ENCODE measurements at regions of chr11 and their contacts with region 1.

Region 1: DNA sequence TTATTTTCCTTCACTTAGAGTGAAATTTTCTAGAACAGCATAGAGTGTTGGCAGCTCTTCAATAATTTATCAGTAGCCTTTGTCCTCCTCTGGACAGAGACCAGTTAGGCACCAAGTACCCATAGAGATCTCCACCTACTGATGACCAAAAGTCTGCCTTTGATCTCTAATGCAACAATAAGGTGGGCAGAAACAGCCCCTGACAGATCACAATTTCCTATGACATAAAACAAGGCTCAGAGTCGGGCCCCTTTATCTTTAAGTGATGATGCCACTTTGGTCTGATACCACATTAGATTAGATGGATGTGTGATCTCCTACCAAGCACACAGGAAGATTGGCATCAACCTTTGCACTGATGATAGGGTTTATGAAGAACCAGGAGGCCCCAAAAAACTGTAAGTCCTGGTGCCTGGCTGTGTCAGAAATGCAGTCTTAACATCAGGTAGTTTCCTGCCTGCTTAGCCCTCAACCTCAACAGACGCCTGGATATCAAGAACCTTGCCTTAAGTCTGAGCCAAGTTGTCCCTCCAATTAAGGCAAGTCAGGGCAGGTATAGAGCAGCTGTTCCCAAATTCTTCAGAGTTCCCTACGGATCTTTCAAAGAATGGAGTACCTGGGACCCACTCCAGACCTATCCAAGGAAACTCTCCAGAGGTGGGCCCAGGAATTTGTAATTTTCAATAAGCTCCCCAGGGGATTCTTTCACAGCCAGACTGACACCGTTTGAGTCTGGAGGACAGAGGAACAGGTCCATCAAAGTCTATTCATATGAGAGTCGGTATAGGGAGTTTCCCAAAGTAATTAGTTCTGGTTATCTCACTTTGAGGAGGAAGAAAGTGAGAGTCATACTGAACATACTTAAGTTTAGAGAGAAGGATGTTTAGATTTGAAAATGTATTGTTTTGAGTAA is 30.6 kb upstream of the TMPRSS4 start:
- DNase-seq: peak; percentile 44
- ATAC-seq: peak; percentile 88
- H3K4me3 ChIP-seq: no peak overlapping the region
- H3K27ac ChIP-seq: no peak overlapping the region
- H3K4me1 ChIP-seq: peaks cover 20% of the 10 kb centered on the region
- H3K27me3 ChIP-seq: no peaks in the 10 kb centered on the region
- CTCF ChIP-seq: no peak
- EP300 ChIP-seq: no peak
- POLR2A ChIP-seq: no peak
- RAD21 ChIP-seq: no peak

Region 2: GRCh38 chr11:118002541-118003423 is 43.5 kb before region 1 on chr11:
- CTCF ChIA-PET with region 1: interaction called, 4 read pairs
- POLR2A ChIA-PET with region 1: interaction called, 8 read pairs
- RAD21 ChIA-PET with region 1: interaction called, 4 read pairs
- SMC1A ChIA-PET with region 1: interaction called, 27 read pairs
- in situ Hi-C with region 1: no loop called
- intact Hi-C with region 1: no loop called
- DNase-seq: no peak
- ATAC-seq: peak; percentile 6; the same call in 2 of the 3 replicates
- H3K4me3 ChIP-seq: no peak overlapping the region
- H3K27ac ChIP-seq: peak overlapping the region; percentile 38
- H3K4me1 ChIP-seq: peaks cover 70% of the 10 kb centered on the region
- H3K27me3 ChIP-seq: no peaks in the 10 kb centered on the region
- CTCF ChIP-seq: no peak
- EP300 ChIP-seq: no peak
- POLR2A ChIP-seq: no peak
- RAD21 ChIP-seq: no peak

Region 3: GRCh38 chr11:118033443-118033842 is 12.9 kb before region 1 on chr11:
- CTCF ChIA-PET with region 1: interaction called, 7 read pairs
- POLR2A ChIA-PET with region 1: interaction called, 6 read pairs
- RAD21 ChIA-PET with region 1: interaction called, 5 read pairs
- SMC1A ChIA-PET with region 1: interaction called, 10 read pairs
- in situ Hi-C with region 1: no loop called
- intact Hi-C with region 1: no loop called
- DNase-seq: no peak
- ATAC-seq: peak; percentile 97
- H3K4me3 ChIP-seq: no peak overlapping the region
- H3K27ac ChIP-seq: no peak overlapping the region
- H3K4me1 ChIP-seq: peaks cover 12% of the 10 kb centered on the region
- H3K27me3 ChIP-seq: no peaks in the 10 kb centered on the region
- CTCF ChIP-seq: no peak
- EP300 ChIP-seq: peak in 1 of 2 experiments; percentile 50; a peak in 1 of 4 replicates
- POLR2A ChIP-seq: no peak
- RAD21 ChIP-seq: no peak

Region 4: GRCh38 chr11:118180300-118180703 is 134.0 kb after region 1 on chr11:
- CTCF ChIA-PET with region 1: no interaction called
- POLR2A ChIA-PET with region 1: no interaction called
- RAD21 ChIA-PET with region 1: no interaction called
- SMC1A ChIA-PET with region 1: no interaction called
- in situ Hi-C with region 1: no loop called
- intact Hi-C with region 1: no loop called
- DNase-seq: no peak
- ATAC-seq: peak; percentile 88
- H3K4me3 ChIP-seq: no peak overlapping the region
- H3K27ac ChIP-seq: no peak overlapping the region
- H3K4me1 ChIP-seq: no peaks in the 10 kb centered on the region
- H3K27me3 ChIP-seq: peaks cover 0 to 7% of the 10 kb centered on the region in 2 experiments; a peak in 1 of 4 replicates
- CTCF ChIP-seq: 0 out of 6 replicates have a peak, but pooled peaks of 1 of the 3 experiments have one; percentile 2
- EP300 ChIP-seq: no peak
- POLR2A ChIP-seq: no peak
- RAD21 ChIP-seq: no peak

Region 5: DNA sequence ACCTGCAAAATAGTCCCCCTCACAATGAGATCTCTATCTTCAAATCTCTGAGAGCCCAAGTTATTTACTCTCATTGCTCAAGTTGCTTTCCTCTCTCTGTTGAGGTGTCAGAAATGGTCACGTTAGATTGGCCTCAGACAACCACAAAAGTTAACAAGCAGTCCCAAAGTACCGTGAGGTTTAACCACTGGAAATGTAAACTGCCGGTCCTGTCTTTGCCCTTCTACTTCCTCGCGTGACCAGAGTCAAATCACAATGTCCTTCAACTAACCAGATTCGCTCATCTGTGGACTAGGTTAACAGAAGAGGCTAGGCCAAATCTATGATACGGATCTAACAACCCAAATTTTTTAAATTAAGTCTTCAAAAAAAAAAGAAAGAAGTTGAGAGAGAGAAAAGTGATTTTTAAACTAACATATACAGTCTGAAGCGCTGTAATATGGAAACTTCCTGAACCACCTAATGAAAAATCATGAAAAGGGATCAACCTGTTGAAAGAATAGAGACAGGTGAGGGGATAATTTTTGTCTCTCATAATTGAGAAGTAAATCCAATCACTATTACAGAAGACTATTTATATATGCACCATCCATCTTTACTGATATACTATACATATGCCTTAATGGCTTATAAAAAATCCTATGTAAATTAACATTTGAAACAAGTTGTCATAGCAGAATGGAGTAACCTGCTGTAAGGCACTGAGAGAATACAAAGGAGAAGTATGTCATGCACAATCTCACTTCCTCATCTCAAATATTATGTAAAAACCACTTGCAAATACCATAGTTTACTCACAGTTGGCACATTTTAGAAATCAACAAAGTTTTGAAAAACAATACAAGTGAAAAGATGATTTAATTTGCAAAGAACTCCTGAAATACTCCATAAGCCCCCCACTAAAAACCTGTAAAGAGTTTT is 181.8 kb after region 1 on chr11:
- CTCF ChIA-PET with region 1: no interaction called
- POLR2A ChIA-PET with region 1: no interaction called
- RAD21 ChIA-PET with region 1: no interaction called
- SMC1A ChIA-PET with region 1: no interaction called
- in situ Hi-C with region 1: no loop called
- intact Hi-C with region 1: no loop called
- DNase-seq: no peak
- ATAC-seq: peak; percentile 85
- H3K4me3 ChIP-seq: no peak overlapping the region
- H3K27ac ChIP-seq: peak overlapping the region; percentile 45; the same call in 1 of the 2 replicates
- H3K4me1 ChIP-seq: peaks cover 30% of the 10 kb centered on the region
- H3K27me3 ChIP-seq: no peaks in the 10 kb centered on the region
- CTCF ChIP-seq: no peak
- EP300 ChIP-seq: peak; percentile 90 to 94
- POLR2A ChIP-seq: no peak
- RAD21 ChIP-seq: no peak

Measured in GM12878 (cell line).